ENCODE measurements at regions of chr17 and their contacts with region 1.

Region 1: DNA sequence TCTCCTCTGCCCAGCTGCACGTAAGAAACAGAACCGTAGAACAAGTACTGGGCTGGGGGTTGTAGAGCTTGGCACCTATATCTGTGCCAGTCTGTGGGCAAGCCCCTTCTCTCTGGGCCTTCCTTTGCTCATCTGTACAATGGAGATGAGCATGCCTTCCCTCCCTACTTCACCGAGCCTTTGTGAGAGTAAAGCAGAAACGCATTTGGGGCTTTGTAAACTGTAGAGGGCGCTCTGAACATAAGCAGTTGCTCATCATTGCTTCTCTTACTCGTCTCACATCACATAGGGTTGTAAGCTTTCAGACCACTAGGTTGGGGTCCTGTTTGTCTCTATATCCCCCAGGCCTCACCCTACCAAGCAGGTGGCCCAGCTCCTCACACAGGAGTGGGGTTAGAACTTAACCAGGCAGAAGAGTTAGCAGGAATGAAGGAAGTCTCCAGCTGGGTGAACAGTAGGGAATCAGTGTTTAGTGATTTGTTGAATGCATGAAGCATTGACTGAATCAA is 15.1 kb downstream of the SAMD14 start:
- DNase-seq: peak; percentile 68
- H3K4me3 ChIP-seq: no peak overlapping the region
- H3K27ac ChIP-seq: no peak overlapping the region
- H3K4me1 ChIP-seq: no peaks in the 10 kb centered on the region
- H3K27me3 ChIP-seq: no peaks in the 10 kb centered on the region
- CTCF ChIP-seq: peak; percentile 74 to 81
- POLR2A ChIP-seq: no peak

Region 2: DNA sequence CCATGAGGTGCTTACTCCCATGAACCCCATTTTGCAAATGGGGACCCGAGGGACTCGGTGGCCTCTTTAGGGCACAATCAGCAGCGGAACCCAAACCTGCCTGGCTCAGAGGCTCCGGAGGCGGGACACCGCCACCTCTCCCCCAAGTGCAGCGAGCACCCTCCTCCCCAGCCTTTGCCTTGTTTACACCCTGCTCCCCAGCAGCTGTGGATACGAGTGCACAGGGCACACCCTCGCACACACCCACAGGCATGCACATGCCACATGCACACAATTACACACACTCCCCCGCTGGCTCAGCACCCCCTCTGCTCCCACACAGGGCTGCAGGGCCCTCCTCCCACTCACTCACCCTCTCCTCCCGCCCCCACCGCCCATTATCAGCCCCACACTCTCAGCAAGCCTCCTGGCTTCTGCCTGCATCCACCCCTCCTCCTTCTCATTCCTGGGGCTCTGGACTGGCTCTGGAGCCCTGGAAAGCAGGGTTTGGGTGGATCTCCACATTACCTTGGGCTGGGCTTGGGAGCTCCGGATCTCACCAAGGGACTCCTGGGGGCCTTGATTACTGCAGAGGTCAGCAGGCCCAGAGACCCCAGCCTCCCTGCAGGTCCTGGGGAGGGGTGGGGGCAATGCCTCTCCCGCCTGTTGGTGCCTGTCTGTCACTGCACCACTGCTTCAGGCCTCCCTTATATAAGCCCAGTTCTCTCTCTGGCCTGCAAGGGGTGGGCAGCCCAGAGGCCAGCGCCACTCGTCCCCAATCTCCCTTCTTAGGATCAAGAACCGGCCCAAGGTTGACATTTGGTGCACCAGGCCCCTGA is 13.3 kb before region 1 on chr17:
- CTCF ChIA-PET with region 1: interaction called, 12 read pairs
- POLR2A ChIA-PET with region 1: no interaction called
- dilution Hi-C with region 1: no loop called
- intact Hi-C with region 1: no loop called
- DNase-seq: no peak
- H3K4me3 ChIP-seq: no peak overlapping the region
- H3K27ac ChIP-seq: no peak overlapping the region
- H3K4me1 ChIP-seq: no peaks in the 10 kb centered on the region
- H3K27me3 ChIP-seq: no peaks in the 10 kb centered on the region
- CTCF ChIP-seq: no peak
- POLR2A ChIP-seq: no peak

Region 3: GRCh38 chr17:50139950-50140871 is 25.3 kb after region 1 on chr17:
- CTCF ChIA-PET with region 1: interaction called, 25 read pairs
- POLR2A ChIA-PET with region 1: no interaction called
- dilution Hi-C with region 1: no loop called
- intact Hi-C with region 1: no loop called
- DNase-seq: peak; percentile 78
- H3K4me3 ChIP-seq: no peak overlapping the region
- H3K27ac ChIP-seq: no peak overlapping the region
- H3K4me1 ChIP-seq: peaks cover 32% of the 10 kb centered on the region
- H3K27me3 ChIP-seq: no peaks in the 10 kb centered on the region
- CTCF ChIP-seq: peak; percentile 94 to 99
- POLR2A ChIP-seq: no peak

Region 4: GRCh38 chr17:50161023-50161910 is 46.4 kb after region 1 on chr17:
- CTCF ChIA-PET with region 1: interaction called, 57 read pairs
- POLR2A ChIA-PET with region 1: no interaction called
- dilution Hi-C with region 1: no loop called
- intact Hi-C with region 1: loop called (anchors 1 kb)
- DNase-seq: peak; percentile 93
- H3K4me3 ChIP-seq: peak overlapping the region; percentile 28 to 63 (median 39)
- H3K27ac ChIP-seq: no peak overlapping the region
- H3K4me1 ChIP-seq: peaks cover 6% of the 10 kb centered on the region
- H3K27me3 ChIP-seq: peaks cover 0 to 2% of the 10 kb centered on the region in 2 experiments
- CTCF ChIP-seq: peak; percentile 95 to 97
- POLR2A ChIP-seq: peak; percentile 22

Region 5: GRCh38 chr17:50177983-50178834 is 63.3 kb after region 1 on chr17:
- CTCF ChIA-PET with region 1: interaction called, 13 read pairs
- POLR2A ChIA-PET with region 1: no interaction called
- dilution Hi-C with region 1: no loop called
- intact Hi-C with region 1: no loop called
- DNase-seq: peak; percentile 84
- H3K4me3 ChIP-seq: no peak overlapping the region
- H3K27ac ChIP-seq: peak overlapping the region; percentile 73
- H3K4me1 ChIP-seq: peaks cover 16% of the 10 kb centered on the region
- H3K27me3 ChIP-seq: no peaks in the 10 kb centered on the region
- CTCF ChIP-seq: peak; percentile 54 to 72
- POLR2A ChIP-seq: peak; percentile 71

Region 6: GRCh38 chr17:50468409-50469207 is 353.7 kb after region 1 on chr17 and contains the start of gene CHAD:
- CTCF ChIA-PET with region 1: no interaction called
- POLR2A ChIA-PET with region 1: no interaction called
- dilution Hi-C with region 1: no loop called
- intact Hi-C with region 1: no loop called
- DNase-seq: no peak
- H3K4me3 ChIP-seq: peak within 1 kb of the TSS in 1 of 3 experiments; percentile 17
- H3K27ac ChIP-seq: no peak within 1 kb of the TSS
- H3K4me1 ChIP-seq: no peaks in the 10 kb centered on the region
- H3K27me3 ChIP-seq: peaks cover 20 to 26% of the 10 kb centered on the region in 2 experiments
- CTCF ChIP-seq: no peak
- POLR2A ChIP-seq: no peak
- total RNA-seq, gene CHAD: not detected in 2 replicates

Measured in endothelial cell of umbilical vein (primary cell).